Aorta (tissue), 5 donors: ENCODE measurements at regions of chr20 and their contacts with region 1.

Region 1: DNA sequence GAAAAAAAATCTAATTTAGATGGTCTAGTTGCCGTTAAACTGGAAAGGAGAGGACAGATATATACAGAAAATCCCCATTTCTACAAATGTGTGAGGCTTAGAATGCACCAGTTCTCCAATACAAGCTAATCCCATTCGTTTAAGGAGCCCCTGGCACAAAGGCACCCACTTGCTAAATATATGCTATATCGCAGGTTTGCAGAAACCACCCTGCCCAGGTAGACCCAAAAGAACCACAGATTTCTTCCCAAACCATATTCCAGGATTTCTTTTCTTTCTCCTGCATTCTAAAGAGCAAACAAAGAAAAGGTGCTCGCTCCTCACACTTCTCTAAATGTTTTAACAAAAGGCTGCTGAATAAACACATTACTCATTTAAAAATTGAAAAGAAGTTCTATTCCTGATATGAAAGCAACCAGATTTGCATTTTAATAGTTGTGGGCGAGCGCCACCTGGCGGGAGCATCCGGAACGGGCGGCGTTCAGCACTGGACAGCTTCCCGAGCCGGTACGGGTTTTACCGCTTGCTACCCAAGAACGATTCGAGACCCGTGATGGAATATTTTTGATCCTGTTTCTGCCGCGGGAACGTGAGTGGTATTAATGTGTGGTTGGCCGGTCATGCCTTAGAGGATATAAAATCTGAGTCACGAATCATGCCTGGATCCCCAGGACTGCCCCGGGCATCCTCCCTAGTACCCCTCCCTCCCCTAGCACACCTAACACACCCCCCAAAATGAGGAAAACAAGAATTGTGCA is 2.1 kb downstream of the PTPRT start:
- DNase-seq: peak; percentile 70 to 89
- ATAC-seq: peak; percentile 74
- H3K4me3 ChIP-seq: peak overlapping the region; percentile 8 to 21
- H3K27ac ChIP-seq: no peak overlapping the region
- H3K4me1 ChIP-seq: no peaks in the 10 kb centered on the region
- H3K27me3 ChIP-seq: no peaks in the 10 kb centered on the region

Region 2: GRCh38 chr20:41738604-41739206 is 1449.0 kb before region 1 on chr20:
- intact Hi-C with region 1: loop called in 1 of 2 experiments (anchors 5 kb)
- DNase-seq: no peak
- ATAC-seq: peak; percentile 73
- H3K4me3 ChIP-seq: no peak overlapping the region
- H3K27ac ChIP-seq: no peak overlapping the region
- H3K4me1 ChIP-seq: no peaks in the 10 kb centered on the region
- H3K27me3 ChIP-seq: no peaks in the 10 kb centered on the region

Region 3: GRCh38 chr20:43243672-43244269 is 56.1 kb after region 1 on chr20:
- intact Hi-C with region 1: loop called (anchors 2 to 5 kb)
- DNase-seq: peak in 1 of 2 donors; percentile 79
- ATAC-seq: no peak
- H3K4me3 ChIP-seq: no peak overlapping the region
- H3K27ac ChIP-seq: no peak overlapping the region
- H3K4me1 ChIP-seq: no peaks in the 10 kb centered on the region
- H3K27me3 ChIP-seq: no peaks in the 10 kb centered on the region